Heart right ventricle (tissue), 16 donors: ENCODE measurements at regions of chr1 and their contacts with region 1.

Region 1: GRCh38 chr1:56189946-56190792 is 389.2 kb downstream of the PLPP3 start:
- DNase-seq: peak in 1 of 2 donors; percentile 40
- ATAC-seq: peak in 7 of 8 donors; percentile 63 to 92 (median 81)
- H3K4me3 ChIP-seq: no peak overlapping the region
- H3K27ac ChIP-seq: peak overlapping the region in 5 of 10 donors; percentile 35 to 54 (median 38)
- H3K4me1 ChIP-seq: peaks cover 0 to 39% (median 19%) of the 10 kb centered on the region in 9 donors
- H3K27me3 ChIP-seq: no peaks in the 10 kb centered on the region
- CTCF ChIP-seq: peak; percentile 11 to 70 (median 51)

Region 2: GRCh38 chr1:56146449-56146848 is 43.7 kb before region 1 on chr1:
- intact Hi-C with region 1: loop called in 1 of 10 experiments (anchors 5 kb)
- DNase-seq: no peak
- ATAC-seq: peak in 5 of 8 donors; percentile 27 to 69 (median 66)
- H3K4me3 ChIP-seq: no peak overlapping the region
- H3K27ac ChIP-seq: peak overlapping the region in 3 of 10 donors; percentile 0 to 19 (median 18)
- H3K4me1 ChIP-seq: peaks cover 0 to 38% (median 7%) of the 10 kb centered on the region in 9 donors
- H3K27me3 ChIP-seq: no peaks in the 10 kb centered on the region
- CTCF ChIP-seq: no peak

Region 3: DNA sequence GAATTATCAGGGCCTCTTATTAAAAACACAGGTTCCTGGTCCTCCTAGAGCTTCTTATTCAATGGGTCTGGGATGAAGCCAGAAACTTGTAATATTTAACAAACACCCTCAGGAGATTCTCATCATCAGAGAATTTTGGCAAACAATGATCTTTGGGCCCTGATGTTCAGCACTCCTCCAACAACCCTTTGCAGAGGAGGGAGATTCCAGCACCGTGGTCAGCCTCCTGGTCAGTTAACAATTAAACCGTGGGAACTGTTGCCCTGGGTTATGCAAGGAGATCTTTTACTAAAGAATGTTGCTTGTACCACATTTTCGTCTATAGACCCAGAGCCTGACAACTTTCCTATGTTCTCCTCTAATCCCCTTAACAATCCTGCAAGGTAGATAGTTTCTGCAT is 94.8 kb after region 1 on chr1:
- intact Hi-C with region 1: loop called in 3 of 10 experiments (anchors 5 to 10 kb)
- DNase-seq: peak in 1 of 2 donors; percentile 23
- ATAC-seq: peak in 7 of 8 donors; percentile 64 to 86 (median 79)
- H3K4me3 ChIP-seq: no peak overlapping the region
- H3K27ac ChIP-seq: peak overlapping the region in 7 of 10 donors; percentile 5 to 73 (median 51)
- H3K4me1 ChIP-seq: peaks cover 0 to 35% (median 18%) of the 10 kb centered on the region in 9 donors
- H3K27me3 ChIP-seq: no peaks in the 10 kb centered on the region
- CTCF ChIP-seq: no peak

Region 4: DNA sequence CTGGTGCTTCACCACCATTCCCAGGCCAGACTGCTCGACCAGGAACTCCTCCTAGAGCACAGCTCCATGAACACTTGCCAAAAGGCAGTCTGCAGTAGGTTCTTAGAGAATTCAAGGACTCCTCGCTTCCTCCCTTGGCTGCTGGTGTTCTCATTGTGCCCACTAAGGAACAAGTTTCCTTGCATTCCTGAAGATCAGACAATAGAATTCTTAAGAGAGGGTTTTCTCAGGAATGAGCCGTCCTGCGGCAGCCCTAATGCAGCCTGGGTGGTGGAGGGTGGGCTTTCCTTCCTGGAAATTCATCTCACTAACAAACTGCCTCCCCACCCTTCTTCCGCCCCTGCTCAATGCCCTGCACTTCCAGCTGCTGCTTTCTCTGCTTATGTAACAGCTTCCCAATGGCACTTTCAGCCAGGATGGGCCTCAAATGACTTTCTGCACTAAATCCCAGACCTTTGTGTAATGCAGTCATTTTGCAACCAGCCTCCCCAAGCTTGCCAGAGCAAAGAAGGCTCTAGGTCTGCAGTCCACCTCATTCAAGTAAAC is 101.3 kb after region 1 on chr1:
- intact Hi-C with region 1: loop called in 3 of 10 experiments (anchors 5 to 10 kb)
- DNase-seq: peak; percentile 16 to 40
- ATAC-seq: peak; percentile 67 to 90 (median 80)
- H3K4me3 ChIP-seq: no peak overlapping the region
- H3K27ac ChIP-seq: peak overlapping the region in 7 of 10 donors; percentile 10 to 73 (median 42)
- H3K4me1 ChIP-seq: peaks cover 0 to 39% (median 10%) of the 10 kb centered on the region in 9 donors
- H3K27me3 ChIP-seq: no peaks in the 10 kb centered on the region
- CTCF ChIP-seq: no peak